HCT116 (cell line): ENCODE measurements at regions of chr4 and their contacts with region 1.

Region 1: DNA sequence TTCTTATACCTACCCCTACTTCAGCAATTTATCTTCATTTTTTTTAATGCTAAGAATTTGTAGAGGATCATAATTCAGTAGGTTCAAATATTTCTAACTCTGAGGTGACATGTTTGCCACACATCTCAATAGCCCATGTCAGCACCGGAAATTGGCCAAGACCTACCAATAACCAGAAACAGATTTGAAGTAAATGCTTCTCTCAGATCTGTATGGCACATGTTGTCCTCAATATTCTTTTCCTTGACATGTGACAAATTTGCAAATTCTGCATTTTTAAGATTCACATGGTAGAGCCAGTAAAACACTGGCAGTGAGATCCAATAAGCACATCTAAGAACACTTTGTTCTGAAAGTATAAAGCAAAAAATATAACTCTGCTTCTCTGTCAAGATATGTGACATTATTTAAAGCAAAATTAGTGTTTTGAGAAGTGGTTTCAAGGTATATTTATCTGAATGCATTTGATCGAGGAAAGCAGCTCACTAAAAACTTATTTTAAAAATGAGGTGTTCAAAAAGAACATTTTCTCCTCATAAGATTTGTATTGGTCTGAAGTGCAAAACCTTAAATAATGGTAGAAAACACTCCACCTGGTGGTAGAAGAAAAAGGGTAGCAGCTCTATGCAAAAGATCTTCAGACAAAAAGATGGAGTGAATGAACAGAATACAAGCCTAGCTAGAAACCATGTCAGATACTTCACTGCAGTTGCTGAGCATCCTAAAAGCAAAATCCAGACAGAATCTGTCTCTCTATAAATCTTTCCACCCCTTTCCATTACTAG is 513.8 kb upstream of the FAM241A start:
- DNase-seq: peak; percentile 12
- ATAC-seq: peak; percentile 67
- H3K4me3 ChIP-seq: no peak overlapping the region
- H3K27ac ChIP-seq: no peak overlapping the region
- H3K4me1 ChIP-seq: no peaks in the 10 kb centered on the region
- H3K27me3 ChIP-seq: no peaks in the 10 kb centered on the region
- CTCF ChIP-seq: peak; percentile 57 to 67 (median 58); a peak in 5 of 6 replicates
- POLR2A ChIP-seq: no peak
- RAD21 ChIP-seq: peak; percentile 47; the same call in 1 of the 2 replicates

Region 2: DNA sequence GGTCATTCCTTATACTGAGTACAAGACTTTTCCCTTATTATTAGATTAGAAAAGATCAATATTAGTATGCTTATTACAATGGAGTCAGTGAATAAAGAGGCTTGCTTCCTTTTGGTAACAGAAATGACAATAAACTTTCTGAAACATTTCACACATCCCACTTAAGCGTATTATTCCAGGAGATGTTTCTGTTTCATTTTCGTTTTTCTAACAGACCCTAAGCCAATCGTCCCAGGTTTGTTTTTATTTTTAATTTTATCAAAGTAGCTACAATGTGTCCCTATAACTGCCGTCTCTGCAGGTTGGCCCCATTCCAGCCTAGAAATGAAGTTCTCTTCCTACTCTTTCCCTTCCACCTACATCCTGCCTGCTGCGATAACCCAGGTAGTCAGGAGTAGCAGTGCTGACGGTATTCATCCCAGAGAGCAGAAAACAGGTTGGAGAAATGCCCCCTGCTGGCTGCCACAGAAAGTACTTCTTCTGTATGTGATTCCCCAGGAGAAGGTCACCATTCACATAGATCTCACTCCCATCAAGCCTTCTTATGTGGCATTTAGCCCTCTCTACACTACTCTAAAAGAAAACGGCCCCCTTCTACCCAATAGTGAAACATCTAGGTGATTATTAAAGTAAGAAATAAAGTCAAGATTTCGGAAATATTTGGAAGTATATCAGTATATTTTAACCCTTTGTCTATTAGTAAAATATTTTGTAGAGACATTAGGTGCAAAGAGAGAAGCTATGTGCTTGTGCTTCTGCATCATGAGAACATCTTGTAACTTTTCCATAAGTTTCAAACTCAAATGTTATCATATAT is 1115.1 kb before region 1 on chr4:
- CTCF ChIA-PET with region 1: no interaction called
- POLR2A ChIA-PET with region 1: no interaction called
- RAD21 ChIA-PET with region 1: no interaction called
- intact Hi-C with region 1: loop called (anchors 10 kb)
- DNase-seq: peak; percentile 72
- ATAC-seq: peak; percentile 98
- H3K4me3 ChIP-seq: peak overlapping the region; percentile 33 to 53
- H3K27ac ChIP-seq: no peak overlapping the region
- H3K4me1 ChIP-seq: peaks cover 0 to 9% of the 10 kb centered on the region in 2 experiments; a peak in 1 of 4 replicates
- H3K27me3 ChIP-seq: no peaks in the 10 kb centered on the region
- CTCF ChIP-seq: peak; percentile 73 to 84 (median 79)
- POLR2A ChIP-seq: no peak
- RAD21 ChIP-seq: peak; percentile 61

Region 3: DNA sequence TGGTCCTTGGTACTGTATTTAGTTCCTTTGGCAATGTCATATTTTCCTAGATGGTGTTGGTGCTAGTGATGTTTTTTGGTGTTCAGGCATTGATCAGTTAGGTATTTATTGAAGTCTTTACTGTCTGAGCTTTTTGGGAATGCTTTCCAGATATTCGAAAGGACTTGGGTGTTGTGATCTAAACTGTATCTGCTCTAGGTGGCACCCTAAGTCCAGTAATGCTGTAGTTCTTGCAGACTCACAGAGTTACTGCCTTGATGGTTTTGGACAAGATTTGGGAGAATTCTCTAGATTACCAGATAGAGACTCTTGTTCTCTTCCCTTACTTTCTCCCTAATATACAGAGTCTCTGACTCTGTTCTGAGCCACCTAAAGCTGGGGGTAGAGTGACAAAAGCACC is 495.0 kb before region 1 on chr4:
- CTCF ChIA-PET with region 1: interaction called, 50 read pairs
- POLR2A ChIA-PET with region 1: no interaction called
- RAD21 ChIA-PET with region 1: interaction called, 4 to 5 read pairs
- intact Hi-C with region 1: loop called (anchors 1 kb)
- DNase-seq: peak; percentile 31
- ATAC-seq: peak; percentile 67; the same call in 1 of the 2 replicates
- H3K4me3 ChIP-seq: no peak overlapping the region
- H3K27ac ChIP-seq: no peak overlapping the region
- H3K4me1 ChIP-seq: no peaks in the 10 kb centered on the region
- H3K27me3 ChIP-seq: no peaks in the 10 kb centered on the region
- CTCF ChIP-seq: peak in 2 of 3 experiments; percentile 39 to 44; a peak in 3 of 6 replicates
- POLR2A ChIP-seq: no peak
- RAD21 ChIP-seq: peak; percentile 73

Region 4: GRCh38 chr4:111475001-111475400 is 156.4 kb before region 1 on chr4:
- CTCF ChIA-PET with region 1: interaction called, 3 read pairs
- POLR2A ChIA-PET with region 1: no interaction called
- RAD21 ChIA-PET with region 1: no interaction called
- intact Hi-C with region 1: loop called (anchors 2 kb)
- DNase-seq: peak; percentile 38
- ATAC-seq: peak; percentile 70
- H3K4me3 ChIP-seq: no peak overlapping the region
- H3K27ac ChIP-seq: no peak overlapping the region
- H3K4me1 ChIP-seq: no peaks in the 10 kb centered on the region
- H3K27me3 ChIP-seq: no peaks in the 10 kb centered on the region
- CTCF ChIP-seq: peak; percentile 53 to 60 (median 54); a peak in 5 of 6 replicates
- POLR2A ChIP-seq: no peak
- RAD21 ChIP-seq: peak; percentile 72

Region 5: GRCh38 chr4:111854494-111855087 is 223.2 kb after region 1 on chr4:
- CTCF ChIA-PET with region 1: interaction called, 14 read pairs
- POLR2A ChIA-PET with region 1: no interaction called
- RAD21 ChIA-PET with region 1: no interaction called
- intact Hi-C with region 1: no loop called
- DNase-seq: peak; percentile 39
- ATAC-seq: peak; percentile 82
- H3K4me3 ChIP-seq: no peak overlapping the region
- H3K27ac ChIP-seq: no peak overlapping the region
- H3K4me1 ChIP-seq: no peaks in the 10 kb centered on the region
- H3K27me3 ChIP-seq: no peaks in the 10 kb centered on the region
- CTCF ChIP-seq: peak; percentile 55 to 89 (median 78)
- POLR2A ChIP-seq: no peak
- RAD21 ChIP-seq: peak; percentile 84

Region 6: GRCh38 chr4:111937368-111937767 is 306.0 kb after region 1 on chr4:
- CTCF ChIA-PET with region 1: interaction called, 19 read pairs
- POLR2A ChIA-PET with region 1: no interaction called
- RAD21 ChIA-PET with region 1: no interaction called
- intact Hi-C with region 1: no loop called
- DNase-seq: peak; percentile 48
- ATAC-seq: peak; percentile 88
- H3K4me3 ChIP-seq: no peak overlapping the region
- H3K27ac ChIP-seq: no peak overlapping the region
- H3K4me1 ChIP-seq: 0 out of 4 replicates have a peak, but pooled peaks cover 0 to 3% of the 10 kb centered on the region in 2 experiments
- H3K27me3 ChIP-seq: no peaks in the 10 kb centered on the region
- CTCF ChIP-seq: peak; percentile 31 to 72 (median 68); a peak in 5 of 6 replicates
- POLR2A ChIP-seq: no peak
- RAD21 ChIP-seq: peak; percentile 79